ENCODE measurements at regions of chr6 and their contacts with region 1.

Region 1: GRCh38 chr6:137944793-137945498 is 77.9 kb downstream of the TNFAIP3 start:
- DNase-seq: peak; percentile 14 to 18
- ATAC-seq: peak; percentile 70 to 87; a peak in 5 of 6 replicates
- H3K4me3 ChIP-seq: no peak overlapping the region
- H3K27ac ChIP-seq: no peak overlapping the region
- H3K4me1 ChIP-seq: no peaks in the 10 kb centered on the region
- CTCF ChIP-seq: peak; percentile 56
- EP300 ChIP-seq: no peak
- POLR2A ChIP-seq: no peak
- RAD21 ChIP-seq: peak; percentile 61 to 62

Region 2: GRCh38 chr6:137631323-137631722 is 313.6 kb before region 1 on chr6:
- CTCF ChIA-PET with region 1: no interaction called
- POLR2A ChIA-PET with region 1: no interaction called
- DNase-seq: no peak
- ATAC-seq: no peak
- H3K4me3 ChIP-seq: no peak overlapping the region
- H3K27ac ChIP-seq: no peak overlapping the region
- H3K4me1 ChIP-seq: no peaks in the 10 kb centered on the region
- CTCF ChIP-seq: no peak
- EP300 ChIP-seq: no peak
- POLR2A ChIP-seq: no peak
- RAD21 ChIP-seq: no peak

Region 3: DNA sequence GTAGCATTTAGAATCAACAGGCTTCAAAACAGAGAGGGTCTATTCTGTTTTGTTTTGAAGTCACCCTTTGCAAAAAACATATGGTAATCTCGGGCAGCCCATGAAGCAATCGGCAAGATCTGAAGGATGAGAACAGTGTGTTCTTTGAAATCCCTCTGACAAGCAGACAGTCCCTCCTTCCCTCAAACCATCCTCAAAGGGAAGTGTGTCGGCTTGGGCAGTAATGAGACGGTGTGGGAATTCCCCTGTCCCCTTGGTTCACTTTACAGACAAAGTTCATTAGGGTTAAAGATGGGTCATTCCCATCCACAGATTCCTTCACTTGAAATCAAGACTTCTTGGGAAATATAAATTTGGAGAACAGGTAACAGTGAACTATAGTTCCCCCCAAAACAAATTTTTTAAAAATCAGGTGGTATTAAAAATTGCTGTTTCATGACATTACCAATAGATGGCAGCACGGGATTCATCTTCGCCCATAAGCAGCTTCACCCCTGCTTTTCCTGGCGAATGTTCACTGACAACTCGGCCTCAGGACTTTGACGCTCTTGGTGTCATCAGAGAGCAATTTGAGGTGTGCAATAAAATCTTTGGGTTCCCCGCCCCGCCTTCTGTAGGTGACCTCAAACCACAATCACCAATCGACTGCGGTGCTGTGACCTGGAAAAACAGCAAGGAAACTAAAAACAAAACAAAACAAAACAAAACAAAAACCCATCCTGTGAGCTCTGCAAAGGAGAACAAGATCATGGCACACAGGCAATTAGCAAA is 237.2 kb before region 1 on chr6:
- CTCF ChIA-PET with region 1: interaction called, 50 read pairs
- POLR2A ChIA-PET with region 1: no interaction called
- DNase-seq: peak; percentile 23 to 79
- ATAC-seq: peak; percentile 62 to 68
- H3K4me3 ChIP-seq: no peak overlapping the region
- H3K27ac ChIP-seq: peak overlapping the region; percentile 65; a peak in 4 of 6 replicates
- H3K4me1 ChIP-seq: peaks cover 5% of the 10 kb centered on the region; the same call in 2 of the 3 replicates
- CTCF ChIP-seq: peak; percentile 72
- EP300 ChIP-seq: no peak
- POLR2A ChIP-seq: no peak
- RAD21 ChIP-seq: peak; percentile 80 to 87

Region 4: DNA sequence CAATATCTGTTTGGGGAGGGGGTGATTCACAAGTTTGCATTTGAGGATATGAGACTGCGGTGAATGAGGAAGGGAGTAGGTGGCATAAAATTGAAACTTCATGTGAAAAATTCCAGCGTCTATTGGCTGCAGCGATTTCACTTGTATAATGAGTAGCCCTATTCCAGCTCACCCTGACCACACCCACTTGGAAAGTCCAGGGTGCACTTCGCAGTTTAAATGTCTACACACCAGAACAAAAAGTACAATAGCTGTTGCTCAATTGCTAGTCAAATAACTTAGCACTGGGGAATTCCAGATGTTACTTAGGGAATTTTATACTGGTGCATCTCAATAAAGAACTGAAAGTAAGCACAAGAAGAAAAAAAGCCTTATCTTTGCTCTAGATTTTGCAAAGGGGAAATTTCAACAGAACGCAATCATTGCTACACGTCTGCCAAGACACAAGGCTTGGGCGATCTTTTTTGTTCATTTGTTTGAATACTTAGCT is 71.6 kb before region 1 on chr6:
- CTCF ChIA-PET with region 1: interaction called, 24 read pairs
- POLR2A ChIA-PET with region 1: no interaction called
- DNase-seq: peak; percentile 72 to 82
- ATAC-seq: peak; percentile 93 to 96
- H3K4me3 ChIP-seq: peak overlapping the region; percentile 21; the same call in 1 of the 3 replicates
- H3K27ac ChIP-seq: peak overlapping the region; percentile 74 to 78
- H3K4me1 ChIP-seq: peaks cover 26% of the 10 kb centered on the region
- CTCF ChIP-seq: no peak
- EP300 ChIP-seq: no peak
- POLR2A ChIP-seq: no peak
- RAD21 ChIP-seq: no peak

Region 5: DNA sequence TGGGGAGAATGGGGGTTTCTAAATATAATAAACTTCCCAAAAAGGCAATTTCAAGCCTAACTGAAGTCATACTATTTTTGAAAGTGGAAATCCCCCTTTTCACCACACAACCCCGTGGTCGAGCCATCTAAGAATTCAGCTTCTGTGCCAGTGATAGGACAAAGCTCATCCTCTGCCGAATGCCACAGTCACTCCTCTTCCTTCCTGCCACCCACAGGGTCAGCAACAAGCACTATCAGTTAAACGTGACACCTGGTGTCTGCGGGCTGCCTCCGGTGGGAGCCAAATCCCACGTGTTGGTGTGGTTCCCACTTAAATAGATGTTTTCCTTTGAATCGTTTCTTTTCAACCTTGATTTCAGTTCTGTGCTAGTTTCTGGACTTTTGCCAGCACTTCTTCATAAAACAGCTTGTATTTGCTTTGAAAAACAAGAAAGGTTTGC is 17.1 kb before region 1 on chr6:
- CTCF ChIA-PET with region 1: interaction called, 13 read pairs
- POLR2A ChIA-PET with region 1: no interaction called
- DNase-seq: no peak
- ATAC-seq: no peak
- H3K4me3 ChIP-seq: no peak overlapping the region
- H3K27ac ChIP-seq: no peak overlapping the region
- H3K4me1 ChIP-seq: no peaks in the 10 kb centered on the region
- CTCF ChIP-seq: no peak
- EP300 ChIP-seq: no peak
- POLR2A ChIP-seq: no peak
- RAD21 ChIP-seq: no peak